Calu3 (cell line): ENCODE measurements at regions of chr14 and their contacts with region 1.

Region 1: DNA sequence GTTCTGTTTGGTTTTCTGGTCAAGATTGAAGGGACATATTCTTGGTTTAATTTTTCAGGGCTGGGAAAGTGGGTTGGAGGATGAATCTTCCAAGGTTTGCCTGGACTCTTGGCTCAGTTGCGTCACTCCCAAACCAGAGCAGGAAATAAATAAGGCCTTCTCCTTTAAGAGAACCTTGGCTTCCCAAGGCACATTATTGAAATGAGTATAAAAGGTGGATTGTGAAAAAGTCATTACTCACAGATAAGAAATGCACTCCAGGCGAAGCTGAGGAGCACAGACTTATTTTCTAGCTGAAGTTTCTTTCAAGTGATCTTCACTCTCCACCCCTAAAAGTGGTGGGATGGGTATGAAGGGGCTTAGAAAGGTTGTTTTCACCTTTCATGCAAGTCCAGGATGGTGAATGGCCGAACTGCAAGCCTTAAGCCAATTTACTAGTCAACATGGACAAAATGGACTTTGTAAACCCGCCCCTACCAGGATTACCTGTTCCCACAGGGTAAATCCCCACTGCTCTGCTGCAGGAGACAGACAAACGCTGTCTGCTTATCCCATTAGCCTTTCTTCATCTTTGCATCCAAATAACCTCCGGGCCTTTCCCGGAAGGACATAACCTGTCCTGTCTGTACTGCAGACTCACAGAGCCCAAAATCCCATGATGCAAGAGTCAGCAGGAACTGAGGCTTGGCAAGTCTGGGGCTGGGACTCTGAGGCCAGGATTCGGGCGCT is 207.6 kb downstream of the BCL11B start:
- DNase-seq: peak; percentile 32
- H3K4me3 Mint-ChIP-seq: peak overlapping the region; percentile 58
- H3K27ac Mint-ChIP-seq: peak overlapping the region; percentile 91
- H3K4me1 Mint-ChIP-seq: peaks cover 35% of the 10 kb centered on the region
- H3K27me3 Mint-ChIP-seq: no peaks in the 10 kb centered on the region
- CTCF ChIP-seq: no peak

Region 2: DNA sequence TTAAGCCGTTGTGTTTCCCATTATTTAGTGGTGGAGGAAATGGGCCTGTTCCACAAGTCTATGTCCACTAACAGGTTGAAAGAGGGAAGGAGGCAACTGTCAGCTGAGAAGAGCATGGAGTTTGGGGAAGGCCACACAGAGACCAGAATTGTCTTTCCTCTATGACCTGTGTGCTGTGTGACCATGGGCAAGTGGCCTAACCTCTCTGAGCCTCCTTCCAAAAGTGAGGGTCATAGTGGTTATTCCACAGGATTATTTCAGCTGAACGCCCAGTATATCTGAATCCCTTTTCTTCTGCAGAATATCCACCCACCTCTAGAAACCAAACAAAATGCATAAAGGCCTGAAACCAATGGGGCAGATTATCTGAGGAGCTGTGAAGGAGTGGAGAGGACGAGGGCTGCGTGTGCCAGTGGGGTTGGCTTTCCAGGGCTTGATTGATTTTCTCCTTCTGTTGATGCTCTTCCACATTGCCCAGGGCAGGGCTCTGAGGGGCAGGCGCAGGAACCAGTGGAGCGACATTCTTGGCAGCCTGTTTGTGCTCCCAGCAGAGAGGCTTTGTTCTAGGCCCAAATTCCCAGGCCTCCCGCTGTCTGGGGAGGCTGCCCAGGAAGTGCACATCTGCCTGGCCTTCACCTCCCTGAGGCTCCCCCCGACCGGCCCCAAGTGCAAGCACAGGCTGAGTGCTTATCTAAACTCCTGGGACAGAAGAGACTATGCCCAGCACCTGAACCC is 245.1 kb before region 1 on chr14:
- CTCF ChIA-PET with region 1: no interaction called
- intact Hi-C with region 1: loop called (anchors 10 kb)
- DNase-seq: peak; percentile 78
- H3K4me3 Mint-ChIP-seq: peak overlapping the region; percentile 5
- H3K27ac Mint-ChIP-seq: peak overlapping the region; percentile 61
- H3K4me1 Mint-ChIP-seq: peaks cover 29% of the 10 kb centered on the region
- H3K27me3 Mint-ChIP-seq: peaks cover 23% of the 10 kb centered on the region
- CTCF ChIP-seq: no peak

Region 3: GRCh38 chr14:98957211-98958047 is 107.0 kb before region 1 on chr14:
- CTCF ChIA-PET with region 1: no interaction called
- intact Hi-C with region 1: no loop called
- DNase-seq: peak; percentile 16
- H3K4me3 Mint-ChIP-seq: no peak overlapping the region
- H3K27ac Mint-ChIP-seq: no peak overlapping the region
- H3K4me1 Mint-ChIP-seq: peaks cover 16% of the 10 kb centered on the region
- H3K27me3 Mint-ChIP-seq: peaks cover 18% of the 10 kb centered on the region
- CTCF ChIP-seq: no peak